Ovary (tissue), 10 donors: ENCODE measurements at regions of chr16 and their contacts with region 1.

Region 1: DNA sequence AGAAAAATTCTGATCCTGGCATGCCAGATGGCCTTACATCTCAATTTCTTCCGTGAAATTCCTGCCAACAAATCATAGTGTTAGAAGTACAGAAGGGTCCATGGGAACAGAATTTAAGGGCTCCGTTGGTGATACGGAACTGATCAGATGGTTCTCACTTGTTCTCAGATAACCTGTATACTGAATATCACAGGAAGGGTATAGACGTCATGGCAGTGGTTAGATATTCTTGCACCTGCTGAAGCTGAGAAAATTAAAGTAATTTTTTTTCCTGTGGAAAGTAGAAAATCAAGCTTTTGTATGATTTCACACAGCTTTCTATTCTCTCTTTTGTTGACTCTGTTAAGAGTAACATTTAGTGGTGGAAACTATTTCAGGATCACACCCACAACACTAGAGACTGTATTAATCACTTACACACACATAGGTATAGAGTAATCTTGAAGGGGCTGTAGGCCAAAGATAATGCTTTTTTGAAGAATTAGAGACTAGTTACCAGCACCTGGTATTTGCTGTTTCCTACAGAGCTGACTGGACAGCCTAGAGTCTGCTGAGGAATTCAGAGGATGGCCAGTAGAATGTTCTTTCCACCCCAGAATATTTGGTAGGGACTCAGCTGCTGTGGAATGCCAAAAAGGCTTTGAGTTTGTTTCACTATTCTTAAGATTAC is 7.5 kb downstream of the TENT4B start:
- DNase-seq: no peak
- H3K4me3 ChIP-seq: no peak overlapping the region
- H3K27ac ChIP-seq: peak overlapping the region in 1 of 2 donors; percentile 7
- H3K4me1 ChIP-seq: peaks cover 13% of the 10 kb centered on the region
- H3K27me3 ChIP-seq: no peaks in the 10 kb centered on the region
- CTCF ChIP-seq: no peak
- EP300 ChIP-seq: no peak
- POLR2A ChIP-seq: no peak

Region 2: DNA sequence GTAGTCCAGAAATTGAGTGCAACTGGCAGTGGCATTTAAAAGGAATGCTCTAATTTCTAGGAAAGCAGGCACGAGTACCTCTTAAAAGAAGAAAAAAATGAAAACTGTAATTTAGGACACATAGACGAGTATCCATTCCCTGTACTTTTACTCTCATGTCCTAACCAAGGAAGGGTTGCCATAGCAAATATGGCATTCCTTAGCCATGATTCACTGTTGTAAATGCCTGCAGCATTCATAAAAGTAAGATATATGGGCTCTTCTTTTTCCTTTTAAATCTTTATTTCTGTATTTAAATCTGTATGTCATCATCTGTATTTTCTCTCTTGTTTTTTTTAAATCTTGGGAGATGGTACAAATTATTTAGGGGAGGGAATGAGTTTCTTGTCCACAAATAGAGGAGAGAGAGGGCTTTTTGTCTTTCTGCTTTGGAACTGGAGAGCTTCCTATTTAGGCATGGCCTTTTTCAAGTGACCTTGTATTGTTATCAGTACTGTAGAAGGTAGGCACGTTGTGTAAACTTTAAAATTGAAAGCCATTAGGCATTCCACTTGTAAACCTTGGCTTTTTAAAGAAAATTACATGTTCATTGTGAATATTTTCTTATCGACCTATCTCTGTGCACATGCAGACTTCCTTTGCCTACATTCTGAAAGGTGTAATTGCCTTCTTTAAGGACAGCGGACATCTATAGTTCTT is 42.4 kb after region 1 on chr16:
- intact Hi-C with region 1: loop called in 2 of 4 experiments (anchors 5 to 10 kb)
- DNase-seq: peak in 1 of 5 donors; percentile 40
- H3K4me3 ChIP-seq: no peak overlapping the region
- H3K27ac ChIP-seq: peak overlapping the region in 1 of 2 donors; percentile 62
- H3K4me1 ChIP-seq: peaks cover 20% of the 10 kb centered on the region
- H3K27me3 ChIP-seq: no peaks in the 10 kb centered on the region
- CTCF ChIP-seq: no peak
- EP300 ChIP-seq: no peak
- POLR2A ChIP-seq: no peak

Region 3: GRCh38 chr16:50273681-50274325 is 113.2 kb after region 1 on chr16:
- intact Hi-C with region 1: no loop called
- DNase-seq: peak in 2 of 5 donors; percentile 14 to 32
- H3K4me3 ChIP-seq: no peak overlapping the region
- H3K27ac ChIP-seq: no peak overlapping the region
- H3K4me1 ChIP-seq: no peaks in the 10 kb centered on the region
- H3K27me3 ChIP-seq: no peaks in the 10 kb centered on the region
- CTCF ChIP-seq: no peak
- EP300 ChIP-seq: no peak
- POLR2A ChIP-seq: no peak

Region 4: DNA sequence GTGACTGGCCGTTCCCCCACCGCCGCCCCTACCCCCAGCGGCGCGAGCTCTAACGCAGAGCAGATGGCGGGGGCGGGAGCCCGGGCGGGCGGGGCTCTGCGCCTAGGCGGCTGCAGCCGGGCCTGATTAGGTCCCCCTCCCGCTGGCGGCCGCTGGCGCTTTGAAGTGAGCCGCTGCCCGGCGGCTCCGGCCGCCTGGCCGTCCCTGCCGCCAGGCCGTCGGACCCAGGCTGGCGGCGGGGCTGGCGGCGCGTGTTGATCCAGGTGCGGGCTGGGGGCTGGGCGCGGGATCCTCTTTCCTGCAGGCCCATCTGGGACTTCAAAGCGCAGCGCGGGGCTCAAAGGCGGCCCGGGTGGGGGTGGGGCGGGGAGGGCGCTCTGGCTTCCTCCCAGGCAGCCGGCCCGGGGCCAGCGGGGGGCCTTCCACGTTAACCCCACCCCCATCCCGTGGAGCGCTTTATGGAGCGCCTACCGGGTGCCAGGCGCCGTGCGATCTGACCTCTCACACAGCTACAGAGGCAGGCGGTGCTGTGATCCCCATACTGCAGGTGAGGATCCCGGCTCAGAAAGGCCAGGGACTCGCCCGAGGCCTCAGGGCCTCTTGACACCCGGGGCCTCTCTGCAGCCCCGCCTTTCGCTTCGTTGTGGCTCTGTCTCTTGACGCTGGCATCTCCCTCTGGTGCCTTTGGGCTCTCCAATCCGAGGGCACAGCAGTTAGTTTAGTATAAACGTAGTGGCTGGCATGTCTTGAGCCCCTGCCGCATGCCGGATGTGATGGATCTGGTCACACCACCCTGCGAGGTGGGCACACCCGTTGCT is 307.5 kb after region 1 on chr16:
- intact Hi-C with region 1: no loop called
- DNase-seq: peak in 3 of 5 donors; percentile 23 to 40 (median 24)
- H3K4me3 ChIP-seq: peak overlapping the region; percentile 0
- H3K27ac ChIP-seq: no peak overlapping the region
- H3K4me1 ChIP-seq: no peaks in the 10 kb centered on the region
- H3K27me3 ChIP-seq: no peaks in the 10 kb centered on the region
- CTCF ChIP-seq: no peak
- EP300 ChIP-seq: no peak
- POLR2A ChIP-seq: no peak